OCI-LY7 (cell line): ENCODE measurements at regions of chr12 and their contacts with region 1.

Region 1: GRCh38 chr12:95858479-95859343 is at the start of gene SNRPF:
- DNase-seq: peak; percentile 96
- H3K4me3 ChIP-seq: peak within 1 kb of the TSS; percentile 98
- H3K27ac ChIP-seq: peak within 1 kb of the TSS; percentile 65
- H3K4me1 ChIP-seq: peaks cover 14% of the 10 kb centered on the region
- CTCF ChIP-seq: 0 out of 2 replicates have a peak, but pooled peaks have one; percentile 27
- total RNA-seq, gene SNRPF: 34.9 and 38.4 TPM in 2 replicates

Region 2: GRCh38 chr12:95516757-95517156 is 342.0 kb before region 1 on chr12:
- CTCF ChIA-PET with region 1: no interaction called
- POLR2A ChIA-PET with region 1: no interaction called
- intact Hi-C with region 1: no loop called
- DNase-seq: no peak
- H3K4me3 ChIP-seq: no peak overlapping the region
- H3K27ac ChIP-seq: no peak overlapping the region
- H3K4me1 ChIP-seq: no peaks in the 10 kb centered on the region
- CTCF ChIP-seq: no peak

Region 3: DNA sequence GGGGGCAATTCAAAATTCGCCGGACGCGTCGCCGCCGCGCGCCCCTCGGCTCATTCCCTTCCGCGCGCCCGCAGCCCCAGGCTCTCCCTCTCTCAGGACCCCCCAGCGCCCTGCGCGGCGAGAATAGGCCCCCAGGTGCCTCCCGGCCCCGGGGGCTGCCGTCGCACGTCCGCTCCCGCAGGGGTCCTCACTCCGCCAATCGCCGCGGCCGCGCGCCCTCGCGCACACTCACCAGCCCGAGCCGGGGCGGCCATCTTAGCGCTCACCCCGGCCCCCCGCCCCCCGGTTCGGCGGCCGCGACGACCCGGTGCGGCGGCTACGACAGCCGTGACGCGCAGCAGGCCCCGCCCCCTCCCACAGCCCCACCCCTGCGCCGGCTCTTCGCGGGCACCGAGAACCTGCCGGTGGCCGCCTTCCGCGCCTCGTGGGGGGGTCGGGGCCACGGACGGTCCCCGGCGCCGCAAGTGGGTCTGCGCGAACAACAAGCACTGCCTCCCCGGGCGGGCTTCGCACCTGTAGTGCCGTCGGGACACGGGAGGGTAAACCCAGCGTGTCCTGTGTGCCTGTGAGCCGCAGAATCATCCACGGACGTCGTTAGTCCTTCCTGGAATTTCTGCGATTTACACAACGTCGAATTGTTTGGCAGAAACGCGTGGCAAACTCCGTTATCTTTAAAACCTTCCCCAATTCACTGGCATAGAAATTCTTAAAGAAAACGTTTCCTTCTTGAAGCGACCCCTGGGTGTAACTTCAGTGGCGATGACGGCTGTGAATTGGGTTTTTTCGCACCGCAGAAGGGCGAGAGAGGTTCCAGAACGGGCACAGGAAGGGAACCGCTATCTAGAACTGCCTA is 309.9 kb before region 1 on chr12:
- CTCF ChIA-PET with region 1: no interaction called
- POLR2A ChIA-PET with region 1: no interaction called
- intact Hi-C with region 1: no loop called
- DNase-seq: peak; percentile 58
- H3K4me3 ChIP-seq: peak overlapping the region; percentile 69
- H3K27ac ChIP-seq: peak overlapping the region; percentile 5
- H3K4me1 ChIP-seq: peaks cover 25% of the 10 kb centered on the region
- CTCF ChIP-seq: no peak

Region 4: GRCh38 chr12:95784286-95784685 is 74.4 kb before region 1 on chr12:
- CTCF ChIA-PET with region 1: no interaction called
- POLR2A ChIA-PET with region 1: no interaction called
- intact Hi-C with region 1: no loop called
- DNase-seq: no peak
- H3K4me3 ChIP-seq: no peak overlapping the region
- H3K27ac ChIP-seq: no peak overlapping the region
- H3K4me1 ChIP-seq: no peaks in the 10 kb centered on the region
- CTCF ChIP-seq: no peak

Region 5: DNA sequence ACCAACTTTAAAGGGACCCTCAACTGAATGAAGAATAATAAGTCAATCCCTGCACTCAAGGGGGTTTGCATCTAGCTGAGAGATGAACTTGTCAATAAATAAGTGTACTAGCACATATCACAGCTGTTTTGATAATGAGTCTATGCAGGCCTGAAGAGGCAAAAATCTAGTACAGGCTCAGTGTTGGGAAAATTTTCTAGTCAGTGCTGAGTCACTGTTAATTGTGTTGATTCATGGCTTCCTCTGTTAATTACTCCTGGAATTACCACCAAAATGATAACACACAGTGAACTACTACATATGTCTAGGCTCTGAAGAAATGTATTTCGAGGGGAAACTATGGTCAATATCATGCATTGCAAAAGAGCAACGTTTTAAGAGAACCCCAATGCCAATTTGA is 18.9 kb after region 1 on chr12:
- CTCF ChIA-PET with region 1: no interaction called
- POLR2A ChIA-PET with region 1: interaction called, 12 read pairs
- intact Hi-C with region 1: no loop called
- DNase-seq: no peak
- H3K4me3 ChIP-seq: no peak overlapping the region
- H3K27ac ChIP-seq: no peak overlapping the region
- H3K4me1 ChIP-seq: no peaks in the 10 kb centered on the region
- CTCF ChIP-seq: no peak